ENCODE measurements at regions of chr9 and their contacts with region 1.

Region 1: DNA sequence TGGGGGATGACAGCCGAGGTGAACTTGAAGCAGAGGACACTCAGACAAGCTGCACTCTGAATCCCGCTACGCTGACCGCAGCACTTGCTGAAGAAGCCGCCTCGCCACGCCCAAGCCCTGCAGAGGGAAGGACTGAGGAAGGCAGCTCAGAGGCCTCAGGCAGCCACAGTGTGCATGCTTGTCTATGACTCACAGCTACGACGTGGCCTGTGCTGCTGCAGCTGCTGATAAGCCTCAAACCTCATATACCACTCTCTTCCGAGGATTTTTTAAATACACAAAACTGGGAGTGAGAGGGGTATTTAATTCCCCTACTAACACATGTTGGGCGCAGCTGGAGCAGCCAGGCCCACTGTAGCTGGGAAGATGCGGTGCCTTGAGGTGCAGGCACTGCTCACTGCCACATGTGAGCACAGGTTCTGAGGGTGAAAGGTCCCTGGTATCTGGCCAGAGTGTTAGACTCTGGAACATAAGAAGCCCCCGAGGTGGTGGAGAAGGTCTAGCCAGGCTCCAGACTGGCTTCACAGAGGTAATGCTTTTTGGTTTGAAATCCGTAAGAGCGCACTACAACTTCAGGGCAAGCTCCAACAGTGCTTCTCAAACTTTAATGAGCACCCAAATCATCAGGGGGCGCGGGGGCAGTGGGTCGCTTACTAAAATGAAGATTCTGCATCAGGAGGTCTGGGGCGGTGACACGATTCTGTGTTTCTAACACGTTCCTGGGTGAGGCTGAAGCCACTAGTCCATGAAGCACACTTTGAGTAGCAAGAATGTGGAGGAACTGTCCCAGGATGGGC is 196.8 kb downstream of the AUH start:
- DNase-seq: peak in 1 of 9 donors; percentile 78
- ATAC-seq: peak; percentile 90
- H3K4me3 ChIP-seq: no peak overlapping the region
- H3K4me3 Mint-ChIP-seq: peak overlapping the region in 2 of 10 donors; percentile 6 to 89
- H3K27ac ChIP-seq: no peak overlapping the region
- H3K27ac Mint-ChIP-seq: peak overlapping the region in 2 of 9 donors; percentile 72 to 97
- H3K4me1 ChIP-seq: peaks cover 15 to 38% of the 10 kb centered on the region in 2 donors
- H3K4me1 Mint-ChIP-seq: peaks cover 13 to 63% (median 35%) of the 10 kb centered on the region in 7 donors
- H3K27me3 ChIP-seq: no peaks in the 10 kb centered on the region
- H3K27me3 Mint-ChIP-seq: no peaks in the 10 kb centered on the region

Region 2: DNA sequence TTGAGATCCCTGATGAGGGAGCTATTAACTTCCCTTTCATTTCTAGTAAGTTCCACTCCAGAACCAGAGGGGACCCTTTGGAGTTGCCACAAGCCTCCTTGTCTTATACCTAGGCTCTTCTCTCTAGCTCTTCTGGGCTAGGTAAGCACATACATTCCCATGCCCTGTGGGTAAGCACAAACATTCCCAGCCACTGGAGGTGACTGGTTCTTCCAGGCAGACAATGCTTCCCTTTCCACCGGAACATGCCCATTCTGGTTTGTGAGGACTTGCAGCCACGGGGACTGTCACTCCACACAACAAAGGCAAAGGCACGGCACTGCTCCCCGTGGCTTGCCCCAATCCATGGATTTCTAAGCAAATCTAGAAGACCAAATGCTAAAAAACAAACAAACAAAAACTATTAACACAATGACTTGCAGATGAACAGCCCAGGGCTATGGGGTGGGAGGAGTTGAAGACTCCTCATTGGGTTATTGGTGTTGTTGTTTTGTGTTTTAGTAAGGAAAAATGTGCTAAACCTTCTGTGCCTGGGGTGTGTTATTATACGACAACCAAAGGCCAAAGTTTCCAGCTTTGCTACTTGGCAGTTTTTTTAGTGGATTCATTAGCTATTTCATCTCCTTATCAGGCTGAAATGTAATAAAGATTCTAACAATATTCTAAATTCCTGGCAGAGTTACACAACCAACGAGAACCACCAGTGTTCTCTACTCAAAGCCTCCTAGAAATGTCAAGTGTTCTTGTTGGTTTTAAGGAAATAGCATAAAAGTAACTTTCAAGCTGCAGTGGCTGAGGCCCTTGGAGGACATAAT is 87.1 kb before region 1 on chr9:
- CTCF ChIA-PET with region 1: no interaction called
- POLR2A ChIA-PET with region 1: no interaction called
- intact Hi-C with region 1: no loop called
- DNase-seq: no peak
- ATAC-seq: no peak
- H3K4me3 ChIP-seq: no peak overlapping the region
- H3K4me3 Mint-ChIP-seq: no peak overlapping the region
- H3K27ac ChIP-seq: no peak overlapping the region
- H3K27ac Mint-ChIP-seq: no peak overlapping the region
- H3K4me1 ChIP-seq: no peaks in the 10 kb centered on the region
- H3K4me1 Mint-ChIP-seq: peaks cover 0 to 10% (median 0%) of the 10 kb centered on the region in 7 donors
- H3K27me3 ChIP-seq: no peaks in the 10 kb centered on the region
- H3K27me3 Mint-ChIP-seq: peaks cover 0 to 4% (median 0%) of the 10 kb centered on the region in 5 donors

Region 3: GRCh38 chr9:91177661-91178280 is 12.8 kb after region 1 on chr9:
- CTCF ChIA-PET with region 1: no interaction called
- POLR2A ChIA-PET with region 1: interaction called, 4 read pairs
- intact Hi-C with region 1: loop called in 1 of 2 experiments (anchors 1 kb)
- DNase-seq: peak in 2 of 9 donors; percentile 13 to 64
- ATAC-seq: peak; percentile 60
- H3K4me3 ChIP-seq: no peak overlapping the region
- H3K4me3 Mint-ChIP-seq: peak overlapping the region; percentile 39 to 73 (median 58)
- H3K27ac ChIP-seq: no peak overlapping the region
- H3K27ac Mint-ChIP-seq: peak overlapping the region in 8 of 9 donors; percentile 19 to 91 (median 64)
- H3K4me1 ChIP-seq: peaks cover 16 to 25% of the 10 kb centered on the region in 2 donors
- H3K4me1 Mint-ChIP-seq: peaks cover 23 to 62% (median 33%) of the 10 kb centered on the region in 7 donors
- H3K27me3 ChIP-seq: no peaks in the 10 kb centered on the region
- H3K27me3 Mint-ChIP-seq: no peaks in the 10 kb centered on the region

Region 4: DNA sequence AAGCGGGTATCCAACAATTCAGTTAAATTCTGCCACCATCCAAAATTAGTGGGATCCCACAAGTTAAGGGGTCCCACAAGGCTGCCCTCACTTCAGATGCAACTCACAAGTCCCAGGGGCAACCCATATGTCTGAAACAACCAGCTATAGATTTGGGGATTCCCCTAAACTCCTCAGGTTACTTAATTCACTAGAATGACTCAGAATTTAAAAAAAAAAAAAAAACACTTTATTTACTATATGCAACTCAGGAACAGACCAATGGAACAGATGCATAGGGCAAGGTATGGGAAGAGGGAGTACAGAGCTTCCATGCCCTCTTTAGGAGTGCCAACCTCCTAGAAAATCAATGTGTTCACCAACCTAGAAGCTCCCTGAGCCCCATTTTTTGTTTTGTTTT is 181.7 kb after region 1 on chr9:
- CTCF ChIA-PET with region 1: no interaction called
- POLR2A ChIA-PET with region 1: no interaction called
- intact Hi-C with region 1: loop called in 1 of 2 experiments (anchors 5 kb)
- DNase-seq: no peak
- ATAC-seq: peak; percentile 20
- H3K4me3 ChIP-seq: no peak overlapping the region
- H3K4me3 Mint-ChIP-seq: no peak overlapping the region
- H3K27ac ChIP-seq: no peak overlapping the region
- H3K27ac Mint-ChIP-seq: peak overlapping the region in 1 of 9 donors; percentile 65
- H3K4me1 ChIP-seq: no peaks in the 10 kb centered on the region
- H3K4me1 Mint-ChIP-seq: peaks cover 21 to 48% (median 24%) of the 10 kb centered on the region in 7 donors
- H3K27me3 ChIP-seq: no peaks in the 10 kb centered on the region
- H3K27me3 Mint-ChIP-seq: no peaks in the 10 kb centered on the region

Measured in naive thymus-derived CD4-positive, alpha-beta T cell (primary cell).